ENCODE measurements at regions of chr1 and their contacts with region 1.

Region 1: GRCh38 chr1:8858888-8859706 is 19.4 kb downstream of the ENO1 start:
- DNase-seq: peak; percentile 71
- H3K4me3 Mint-ChIP-seq: no peak overlapping the region
- H3K27ac Mint-ChIP-seq: peak overlapping the region; percentile 82
- H3K4me1 Mint-ChIP-seq: peaks cover 44% of the 10 kb centered on the region
- H3K27me3 Mint-ChIP-seq: no peaks in the 10 kb centered on the region

Region 2: DNA sequence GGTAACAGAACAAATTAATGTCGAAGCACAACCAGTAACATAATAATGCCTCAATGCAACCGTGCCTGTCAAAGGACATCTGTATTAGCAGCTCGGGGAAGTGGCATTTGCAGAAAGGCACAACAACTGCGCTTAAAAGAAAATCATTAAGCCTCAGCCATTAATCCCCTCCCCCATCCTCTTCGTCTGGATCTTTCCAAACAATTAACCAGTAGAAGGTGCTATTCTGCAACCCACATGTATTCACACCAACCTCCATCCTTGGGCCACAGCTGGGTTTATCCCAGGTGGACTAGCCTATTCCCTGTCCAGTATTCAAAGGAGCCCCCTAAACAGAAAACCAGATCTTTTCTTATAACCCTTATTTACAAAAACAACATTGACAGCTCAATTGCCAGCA is 44.2 kb before region 1 on chr1:
- CTCF ChIA-PET with region 1: no interaction called
- POLR2A ChIA-PET with region 1: no interaction called
- DNase-seq: no peak
- H3K4me3 Mint-ChIP-seq: peak overlapping the region; percentile 7
- H3K27ac Mint-ChIP-seq: no peak overlapping the region
- H3K4me1 Mint-ChIP-seq: peaks cover 42% of the 10 kb centered on the region
- H3K27me3 Mint-ChIP-seq: peaks cover 2% of the 10 kb centered on the region

Region 3: GRCh38 chr1:8848663-8849386 is 10.3 kb before region 1 on chr1:
- CTCF ChIA-PET with region 1: interaction called, 42 read pairs
- POLR2A ChIA-PET with region 1: interaction called, 4 read pairs
- DNase-seq: peak; percentile 72
- H3K4me3 Mint-ChIP-seq: no peak overlapping the region
- H3K27ac Mint-ChIP-seq: no peak overlapping the region
- H3K4me1 Mint-ChIP-seq: peaks cover 14% of the 10 kb centered on the region
- H3K27me3 Mint-ChIP-seq: no peaks in the 10 kb centered on the region

Region 4: GRCh38 chr1:8873506-8874229 is 14.6 kb after region 1 on chr1:
- CTCF ChIA-PET with region 1: interaction called, 11 read pairs
- POLR2A ChIA-PET with region 1: interaction called, 4 read pairs
- DNase-seq: peak; percentile 67
- H3K4me3 Mint-ChIP-seq: peak overlapping the region; percentile 96
- H3K27ac Mint-ChIP-seq: peak overlapping the region; percentile 76
- H3K4me1 Mint-ChIP-seq: peaks cover 74% of the 10 kb centered on the region
- H3K27me3 Mint-ChIP-seq: no peaks in the 10 kb centered on the region

Region 5: GRCh38 chr1:8878448-8879347 is 19.6 kb after region 1 on chr1 and contains the start of gene ENO1:
- CTCF ChIA-PET with region 1: interaction called, 12 read pairs
- POLR2A ChIA-PET with region 1: interaction called, 5 read pairs
- DNase-seq: peak; percentile 97
- H3K4me3 Mint-ChIP-seq: peak within 1 kb of the TSS; percentile 96
- H3K27ac Mint-ChIP-seq: peak within 1 kb of the TSS; percentile 98
- H3K4me1 Mint-ChIP-seq: peaks cover 44% of the 10 kb centered on the region
- H3K27me3 Mint-ChIP-seq: no peaks in the 10 kb centered on the region
- total RNA-seq, gene ENO1: 1,608 to 1,874 TPM